Activated CD4-positive, alpha-beta memory T cell treated with anti-CD3 and anti-CD28 coated beads for 36 hours (primary cell): ENCODE measurements at regions of chr10 and their contacts with region 1.

Region 1: GRCh38 chr10:72048450-72049124 is 39.8 kb downstream of the SPOCK2 start:
- DNase-seq: peak; percentile 95
- H3K4me3 Mint-ChIP-seq: no peak overlapping the region
- H3K27ac Mint-ChIP-seq: no peak overlapping the region
- H3K4me1 Mint-ChIP-seq: peaks cover 4% of the 10 kb centered on the region
- H3K27me3 Mint-ChIP-seq: no peaks in the 10 kb centered on the region

Region 2: GRCh38 chr10:71957546-71958275 is 90.9 kb before region 1 on chr10:
- CTCF ChIA-PET with region 1: interaction called, 78 read pairs
- POLR2A ChIA-PET with region 1: no interaction called
- intact Hi-C with region 1: loop called (anchors 1 kb)
- DNase-seq: no peak
- H3K4me3 Mint-ChIP-seq: no peak overlapping the region
- H3K27ac Mint-ChIP-seq: no peak overlapping the region
- H3K4me1 Mint-ChIP-seq: no peaks in the 10 kb centered on the region
- H3K27me3 Mint-ChIP-seq: peaks cover 18% of the 10 kb centered on the region

Region 3: GRCh38 chr10:72013202-72013945 is 35.2 kb before region 1 on chr10:
- CTCF ChIA-PET with region 1: interaction called, 14 read pairs
- POLR2A ChIA-PET with region 1: no interaction called
- intact Hi-C with region 1: no loop called
- DNase-seq: no peak
- H3K4me3 Mint-ChIP-seq: no peak overlapping the region
- H3K27ac Mint-ChIP-seq: no peak overlapping the region
- H3K4me1 Mint-ChIP-seq: no peaks in the 10 kb centered on the region
- H3K27me3 Mint-ChIP-seq: no peaks in the 10 kb centered on the region

Region 4: DNA sequence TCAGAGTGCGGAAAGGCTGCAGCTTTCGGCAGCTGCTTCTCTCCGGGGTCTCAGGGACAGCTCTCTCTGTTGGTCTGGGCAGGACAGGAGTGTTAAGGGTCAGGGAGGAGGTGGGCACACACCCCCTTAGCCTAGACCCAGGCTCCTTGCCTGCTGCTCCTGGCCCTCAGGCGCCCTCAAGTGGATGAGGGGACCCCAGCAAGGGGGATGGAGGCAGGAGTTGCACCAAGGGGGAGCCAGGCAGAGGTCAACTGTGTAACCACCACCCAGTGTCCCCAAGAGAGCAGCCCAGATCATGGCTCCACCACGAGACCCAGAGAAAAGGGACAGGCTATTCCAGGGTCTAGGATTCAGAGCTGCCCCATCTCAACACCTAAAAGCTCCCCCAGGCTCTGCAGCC is 12.9 kb after region 1 on chr10:
- CTCF ChIA-PET with region 1: interaction called, 24 read pairs
- POLR2A ChIA-PET with region 1: no interaction called
- intact Hi-C with region 1: no loop called
- DNase-seq: no peak
- H3K4me3 Mint-ChIP-seq: no peak overlapping the region
- H3K27ac Mint-ChIP-seq: peak overlapping the region; percentile 55
- H3K4me1 Mint-ChIP-seq: peaks cover 26% of the 10 kb centered on the region
- H3K27me3 Mint-ChIP-seq: no peaks in the 10 kb centered on the region

Region 5: DNA sequence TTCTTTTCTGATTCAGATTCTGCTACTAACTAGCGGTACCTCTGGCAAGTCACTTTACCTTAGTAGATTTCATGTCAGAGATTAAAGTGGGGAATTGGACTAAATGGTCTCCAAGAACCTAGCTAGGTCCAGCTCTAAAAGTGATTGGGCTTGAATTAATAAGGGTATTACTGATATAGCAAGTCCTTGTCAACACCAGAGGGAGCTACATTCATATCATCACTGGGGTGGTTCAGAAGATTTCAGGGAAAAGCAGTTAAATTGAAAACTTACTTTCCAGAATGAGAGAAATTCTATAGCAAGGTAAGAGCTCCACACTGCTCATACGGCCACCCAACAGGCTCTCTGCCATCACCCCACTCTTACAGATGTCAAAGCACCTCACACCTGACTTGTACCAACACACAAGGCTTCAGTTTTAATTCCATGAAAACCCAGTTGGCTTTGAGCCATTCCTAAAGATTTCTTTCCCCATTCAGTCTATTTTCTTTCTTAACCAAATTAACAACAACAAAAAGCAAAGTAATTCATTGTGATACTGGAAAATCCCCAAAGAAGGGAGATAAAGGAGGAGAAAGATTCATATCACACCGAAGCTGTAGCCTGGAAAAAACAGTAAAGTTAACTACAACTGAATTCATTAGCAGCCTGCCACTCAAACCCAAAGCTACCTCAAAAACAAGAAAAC is 77.7 kb after region 1 on chr10:
- CTCF ChIA-PET with region 1: interaction called, 12 read pairs
- POLR2A ChIA-PET with region 1: no interaction called
- intact Hi-C with region 1: loop called (anchors 2 kb)
- DNase-seq: no peak
- H3K4me3 Mint-ChIP-seq: no peak overlapping the region
- H3K27ac Mint-ChIP-seq: peak overlapping the region; percentile 6
- H3K4me1 Mint-ChIP-seq: peaks cover 34% of the 10 kb centered on the region
- H3K27me3 Mint-ChIP-seq: no peaks in the 10 kb centered on the region

Region 6: GRCh38 chr10:72223743-72224101 is 175.1 kb after region 1 on chr10:
- CTCF ChIA-PET with region 1: interaction called, 50 read pairs
- POLR2A ChIA-PET with region 1: no interaction called
- intact Hi-C with region 1: loop called (anchors 1 kb)
- DNase-seq: peak; percentile 41
- H3K4me3 Mint-ChIP-seq: no peak overlapping the region
- H3K27ac Mint-ChIP-seq: peak overlapping the region; percentile 89
- H3K4me1 Mint-ChIP-seq: peaks cover 56% of the 10 kb centered on the region
- H3K27me3 Mint-ChIP-seq: no peaks in the 10 kb centered on the region